ENCODE measurements at regions of chr11 and their contacts with region 1.

Region 1: GRCh38 chr11:7520981-7521487 is 7.2 kb downstream of the PPFIBP2 start:
- DNase-seq: no peak
- H3K4me3 Mint-ChIP-seq: no peak overlapping the region
- H3K27ac Mint-ChIP-seq: no peak overlapping the region
- H3K4me1 Mint-ChIP-seq: peaks cover 57% of the 10 kb centered on the region
- H3K27me3 Mint-ChIP-seq: peaks cover 19% of the 10 kb centered on the region

Region 2: GRCh38 chr11:7449211-7449840 is 71.7 kb before region 1 on chr11:
- CTCF ChIA-PET with region 1: no interaction called
- DNase-seq: no peak
- H3K4me3 Mint-ChIP-seq: no peak overlapping the region
- H3K27ac Mint-ChIP-seq: no peak overlapping the region
- H3K4me1 Mint-ChIP-seq: no peaks in the 10 kb centered on the region
- H3K27me3 Mint-ChIP-seq: peaks cover 4% of the 10 kb centered on the region

Region 3: GRCh38 chr11:7538031-7538430 is 17.0 kb after region 1 on chr11:
- CTCF ChIA-PET with region 1: interaction called, 14 read pairs
- DNase-seq: peak; percentile 57
- H3K4me3 Mint-ChIP-seq: peak overlapping the region; percentile 63
- H3K27ac Mint-ChIP-seq: peak overlapping the region; percentile 77
- H3K4me1 Mint-ChIP-seq: peaks cover 69% of the 10 kb centered on the region
- H3K27me3 Mint-ChIP-seq: peaks cover 40% of the 10 kb centered on the region

Region 4: GRCh38 chr11:7577291-7578190 is 56.5 kb after region 1 on chr11:
- CTCF ChIA-PET with region 1: no interaction called
- DNase-seq: peak; percentile 26
- H3K4me3 Mint-ChIP-seq: peak overlapping the region; percentile 19
- H3K27ac Mint-ChIP-seq: peak overlapping the region; percentile 15
- H3K4me1 Mint-ChIP-seq: peaks cover 44% of the 10 kb centered on the region
- H3K27me3 Mint-ChIP-seq: peaks cover 82% of the 10 kb centered on the region

Measured in activated naive CD4-positive, alpha-beta T cell treated with anti-CD3 and anti-CD28 coated beads, Interleukin-2, amount 10 ng/mL, durations not matched to agents 7 days and 5 days (primary cell).